ENCODE measurements at regions of chr22 and their contacts with region 1.

Region 1: GRCh38 chr22:31313366-31314147 is 21.3 kb upstream of the PIK3IP1 start:
- DNase-seq: peak; percentile 40 to 71 (median 62)
- ATAC-seq: peak; percentile 76
- H3K4me3 ChIP-seq: no peak overlapping the region
- H3K4me3 Mint-ChIP-seq: peak overlapping the region in 3 of 10 donors; percentile 2 to 10 (median 9)
- H3K27ac ChIP-seq: peak overlapping the region; percentile 32
- H3K27ac Mint-ChIP-seq: peak overlapping the region; percentile 16 to 84 (median 45)
- H3K4me1 ChIP-seq: peaks cover 2 to 10% of the 10 kb centered on the region in 2 donors
- H3K4me1 Mint-ChIP-seq: peaks cover 9 to 33% (median 26%) of the 10 kb centered on the region in 7 donors
- H3K27me3 ChIP-seq: no peaks in the 10 kb centered on the region
- H3K27me3 Mint-ChIP-seq: no peaks in the 10 kb centered on the region

Region 2: DNA sequence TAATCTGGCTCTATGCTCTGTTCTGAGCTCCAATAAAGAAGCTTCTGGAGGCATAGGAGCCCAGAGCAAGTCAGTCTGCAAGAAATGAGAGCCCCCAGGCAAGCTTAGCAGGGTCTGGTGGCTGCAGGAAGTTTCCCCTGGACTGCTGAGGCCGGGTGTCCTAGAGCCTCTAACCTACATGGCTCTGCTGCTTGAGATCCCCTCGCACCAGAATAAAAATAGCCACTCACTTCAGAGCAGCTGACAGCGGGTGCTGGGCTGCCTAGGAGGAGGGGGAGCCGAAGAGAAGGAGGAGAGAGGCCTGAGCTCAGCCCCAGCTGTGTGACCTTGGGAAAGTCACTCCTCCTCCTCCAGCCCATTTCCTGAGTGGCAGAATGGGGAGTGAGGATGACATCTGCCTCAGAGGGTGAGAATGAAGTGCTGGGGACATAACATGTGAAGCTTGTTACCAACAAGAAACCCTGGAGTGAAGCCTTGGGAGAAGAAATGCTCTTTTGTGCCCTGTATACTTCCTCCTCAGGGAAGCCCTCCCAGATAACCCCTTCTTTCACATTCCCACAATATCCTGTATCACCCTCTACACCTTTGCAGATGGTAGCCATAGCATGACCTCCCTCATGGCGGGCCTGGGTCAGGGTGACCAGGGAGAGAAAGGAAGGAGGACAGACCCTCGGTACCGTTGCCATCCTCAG is 194.4 kb before region 1 on chr22:
- CTCF ChIA-PET with region 1: no interaction called
- POLR2A ChIA-PET with region 1: no interaction called
- intact Hi-C with region 1: no loop called
- DNase-seq: no peak
- ATAC-seq: no peak
- H3K4me3 ChIP-seq: no peak overlapping the region
- H3K4me3 Mint-ChIP-seq: no peak overlapping the region
- H3K27ac ChIP-seq: no peak overlapping the region
- H3K27ac Mint-ChIP-seq: no peak overlapping the region
- H3K4me1 ChIP-seq: no peaks in the 10 kb centered on the region
- H3K4me1 Mint-ChIP-seq: no peaks in the 10 kb centered on the region
- H3K27me3 ChIP-seq: no peaks in the 10 kb centered on the region
- H3K27me3 Mint-ChIP-seq: no peaks in the 10 kb centered on the region

Region 3: DNA sequence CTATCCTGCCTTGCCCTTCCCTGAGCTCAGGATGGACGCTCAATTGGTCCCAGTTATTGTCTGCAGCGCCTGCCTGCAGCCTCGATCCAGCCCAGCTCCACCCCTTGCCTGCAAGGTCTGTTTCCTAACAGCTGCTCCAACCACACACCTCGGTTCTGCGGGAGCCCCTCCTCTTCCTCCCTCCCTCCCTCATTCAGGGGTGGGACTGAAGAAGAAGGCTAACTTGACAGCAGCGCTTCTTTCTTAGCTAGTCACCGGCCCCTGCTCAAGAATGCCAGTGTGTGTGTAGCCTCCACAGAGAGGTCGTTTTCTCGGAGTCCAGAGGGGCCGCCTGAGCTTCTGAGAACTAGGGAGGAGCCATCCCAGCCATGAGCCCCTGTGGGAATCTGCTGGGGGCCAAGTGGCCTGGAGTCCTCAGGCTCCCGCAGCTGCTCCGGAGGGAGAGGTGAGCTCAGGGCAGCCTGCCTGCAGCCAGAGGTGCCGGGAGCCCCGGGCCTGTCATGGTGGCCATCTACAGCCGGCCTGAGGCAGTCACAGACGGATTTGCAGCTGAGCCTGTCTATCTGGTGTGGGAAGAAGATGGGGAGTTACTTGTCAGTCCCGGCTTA is 65.3 kb before region 1 on chr22:
- CTCF ChIA-PET with region 1: no interaction called
- POLR2A ChIA-PET with region 1: no interaction called
- intact Hi-C with region 1: loop called in 1 of 2 experiments (anchors 2 kb)
- DNase-seq: peak; percentile 33 to 78 (median 73)
- ATAC-seq: peak; percentile 100
- H3K4me3 ChIP-seq: no peak overlapping the region
- H3K4me3 Mint-ChIP-seq: peak overlapping the region; percentile 73 to 93 (median 83)
- H3K27ac ChIP-seq: no peak overlapping the region
- H3K27ac Mint-ChIP-seq: peak overlapping the region; percentile 20 to 87 (median 71)
- H3K4me1 ChIP-seq: peaks cover 9 to 17% of the 10 kb centered on the region in 2 donors
- H3K4me1 Mint-ChIP-seq: peaks cover 8 to 41% (median 28%) of the 10 kb centered on the region in 7 donors
- H3K27me3 ChIP-seq: no peaks in the 10 kb centered on the region
- H3K27me3 Mint-ChIP-seq: no peaks in the 10 kb centered on the region

Region 4: GRCh38 chr22:31272522-31273446 is 40.8 kb before region 1 on chr22:
- CTCF ChIA-PET with region 1: interaction called, 18 read pairs
- POLR2A ChIA-PET with region 1: interaction called, 2,331 read pairs
- intact Hi-C with region 1: loop called (anchors 2 to 5 kb)
- DNase-seq: peak in 5 of 9 donors; percentile 38 to 58 (median 50)
- ATAC-seq: peak; percentile 81
- H3K4me3 ChIP-seq: no peak overlapping the region
- H3K4me3 Mint-ChIP-seq: peak overlapping the region in 4 of 10 donors; percentile 18 to 50 (median 28)
- H3K27ac ChIP-seq: peak overlapping the region; percentile 51
- H3K27ac Mint-ChIP-seq: peak overlapping the region; percentile 46 to 95 (median 86)
- H3K4me1 ChIP-seq: peaks cover 2 to 63% of the 10 kb centered on the region in 2 donors
- H3K4me1 Mint-ChIP-seq: peaks cover 25 to 91% (median 77%) of the 10 kb centered on the region in 7 donors
- H3K27me3 ChIP-seq: no peaks in the 10 kb centered on the region
- H3K27me3 Mint-ChIP-seq: no peaks in the 10 kb centered on the region

Region 5: GRCh38 chr22:31278622-31279326 is 34.8 kb before region 1 on chr22:
- CTCF ChIA-PET with region 1: interaction called, 18 read pairs
- POLR2A ChIA-PET with region 1: interaction called, 2,331 read pairs
- intact Hi-C with region 1: loop called (anchors 1 to 5 kb)
- DNase-seq: peak in 7 of 9 donors; percentile 67 to 85 (median 79)
- ATAC-seq: peak; percentile 75
- H3K4me3 ChIP-seq: peak overlapping the region; percentile 35
- H3K4me3 Mint-ChIP-seq: peak overlapping the region; percentile 74 to 97 (median 80)
- H3K27ac ChIP-seq: peak overlapping the region; percentile 100
- H3K27ac Mint-ChIP-seq: peak overlapping the region; percentile 96 to 100 (median 99)
- H3K4me1 ChIP-seq: peaks cover 33 to 94% of the 10 kb centered on the region in 2 donors
- H3K4me1 Mint-ChIP-seq: peaks cover 52 to 98% (median 94%) of the 10 kb centered on the region in 7 donors
- H3K27me3 ChIP-seq: no peaks in the 10 kb centered on the region
- H3K27me3 Mint-ChIP-seq: no peaks in the 10 kb centered on the region

Region 6: GRCh38 chr22:31295831-31296657 is 17.5 kb before region 1 on chr22:
- CTCF ChIA-PET with region 1: interaction called, 33 read pairs
- POLR2A ChIA-PET with region 1: interaction called, 2,331 read pairs
- intact Hi-C with region 1: loop called (anchors 1 kb)
- DNase-seq: no peak
- ATAC-seq: no peak
- H3K4me3 ChIP-seq: peak overlapping the region; percentile 5
- H3K4me3 Mint-ChIP-seq: peak overlapping the region; percentile 63 to 98 (median 81)
- H3K27ac ChIP-seq: peak overlapping the region; percentile 60
- H3K27ac Mint-ChIP-seq: peak overlapping the region in 8 of 9 donors; percentile 79 to 99 (median 88)
- H3K4me1 ChIP-seq: peaks cover 20 to 41% of the 10 kb centered on the region in 2 donors
- H3K4me1 Mint-ChIP-seq: peaks cover 25 to 75% (median 62%) of the 10 kb centered on the region in 7 donors
- H3K27me3 ChIP-seq: no peaks in the 10 kb centered on the region
- H3K27me3 Mint-ChIP-seq: peaks cover 0 to 3% (median 0%) of the 10 kb centered on the region in 5 donors